Common myeloid progenitor, CD34-positive (primary cell): ENCODE measurements at regions of chr12 and their contacts with region 1.

Region 1: DNA sequence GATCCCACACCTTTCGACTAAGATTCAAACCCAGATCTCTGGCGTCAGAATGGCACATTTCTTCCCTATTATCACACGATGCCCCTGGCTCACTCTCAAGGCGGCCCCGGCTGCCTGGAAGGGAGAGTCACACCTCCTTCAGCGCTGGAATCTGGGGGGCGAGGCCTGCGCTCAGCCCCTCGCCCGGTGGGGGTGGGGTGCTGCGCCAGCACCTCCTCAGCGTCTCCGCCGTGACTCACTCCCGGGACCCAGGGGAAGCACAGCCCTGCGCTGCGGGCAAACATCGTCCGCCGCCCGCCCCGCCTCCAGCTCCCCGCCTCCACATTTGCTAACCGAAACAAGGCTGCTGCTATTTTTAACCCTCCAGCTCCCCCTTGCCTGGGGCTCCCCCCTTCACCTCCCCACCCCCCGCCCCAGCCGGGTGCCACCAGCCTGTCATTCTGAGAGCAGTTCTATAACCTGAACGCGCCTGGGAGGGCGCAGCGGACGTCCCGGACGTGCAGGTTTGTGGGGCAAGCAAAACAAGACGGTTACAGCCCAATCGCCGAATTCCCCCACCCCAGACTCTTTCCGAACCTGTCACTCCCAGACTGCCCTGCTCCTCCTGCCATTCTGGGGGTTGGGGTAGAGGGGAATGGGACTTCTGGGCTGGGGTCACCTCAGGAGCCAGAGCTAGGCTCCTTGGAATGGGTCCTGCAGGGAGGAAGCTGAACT is 6.7 kb downstream of the HDAC7 start:
- DNase-seq: peak; percentile 91 to 98 (median 97)
- H3K4me3 ChIP-seq: peak overlapping the region in 6 of 7 experiments; percentile 35 to 74 (median 58)
- H3K27ac ChIP-seq: peak overlapping the region; percentile 59 to 88
- H3K4me1 ChIP-seq: peaks cover 45 to 98% (median 97%) of the 10 kb centered on the region in 4 experiments
- H3K27me3 ChIP-seq: no peaks in the 10 kb centered on the region

Region 2: DNA sequence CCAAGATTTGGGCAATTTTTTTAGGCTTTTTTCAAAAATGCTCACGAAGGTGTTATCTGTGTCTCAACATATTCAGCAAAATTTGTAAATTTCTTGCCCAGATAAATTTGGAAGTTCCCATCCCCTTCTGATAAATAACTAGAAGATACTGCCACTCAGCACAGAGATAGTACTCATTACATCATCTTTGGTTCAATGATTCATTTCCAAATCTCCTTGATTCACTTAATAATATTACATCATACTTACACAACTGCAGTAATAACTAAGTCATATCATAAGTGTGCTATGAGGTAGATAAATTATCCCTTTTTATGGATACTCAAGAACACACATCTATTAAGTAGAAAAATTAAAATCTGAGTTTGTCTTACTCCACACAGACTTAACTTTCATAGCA is 196.5 kb before region 1 on chr12:
- CTCF ChIA-PET with region 1: no interaction called
- POLR2A ChIA-PET with region 1: no interaction called
- DNase-seq: no peak
- H3K4me3 ChIP-seq: no peak overlapping the region
- H3K27ac ChIP-seq: no peak overlapping the region
- H3K4me1 ChIP-seq: no peaks in the 10 kb centered on the region
- H3K27me3 ChIP-seq: no peaks in the 10 kb centered on the region

Region 3: DNA sequence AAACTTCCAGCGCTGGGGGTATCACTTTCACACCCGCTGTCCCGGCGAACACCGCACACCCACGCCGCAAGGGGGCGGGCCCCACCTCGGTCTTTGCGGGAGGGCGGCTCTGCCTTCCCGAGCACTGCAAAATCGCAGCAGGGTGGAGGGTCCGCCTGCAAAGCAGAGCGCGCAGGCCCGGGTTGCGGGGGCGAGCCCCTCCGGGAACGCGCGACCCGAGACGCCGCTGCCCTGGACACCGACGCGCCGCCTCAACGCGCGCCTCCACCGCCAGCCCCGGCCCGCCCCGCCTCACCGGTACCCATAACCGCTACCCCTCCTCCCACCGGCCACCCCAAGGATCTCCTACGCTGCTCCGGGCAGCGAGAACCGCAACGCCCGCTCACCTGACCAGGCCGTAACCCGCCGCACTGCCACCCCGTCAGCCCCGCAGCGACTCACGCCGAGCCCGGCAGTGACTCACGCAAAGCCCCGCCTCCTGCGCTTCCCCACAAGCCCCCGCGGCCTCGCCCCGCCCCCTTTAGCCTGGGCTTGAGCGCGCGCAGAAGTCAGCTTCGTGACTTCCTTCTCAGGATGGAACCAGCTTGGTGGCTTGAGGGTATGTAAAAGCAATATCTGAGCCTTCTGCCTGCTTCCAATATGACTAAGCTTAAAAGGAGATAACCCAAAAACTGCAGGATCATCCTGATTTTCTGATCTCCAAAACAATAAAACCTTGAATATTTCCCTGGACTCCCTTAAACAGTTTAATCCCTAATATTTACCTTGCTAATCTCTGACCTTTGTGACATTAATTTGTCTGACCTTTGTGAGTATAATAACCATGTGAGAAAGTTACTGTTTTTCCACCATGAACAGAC is 107.2 kb before region 1 on chr12 and contains the start of gene RPAP3:
- CTCF ChIA-PET with region 1: interaction called, 10 read pairs
- POLR2A ChIA-PET with region 1: no interaction called
- DNase-seq: peak; percentile 95 to 98 (median 98)
- H3K4me3 ChIP-seq: peak within 1 kb of the TSS; percentile 55 to 88 (median 80)
- H3K27ac ChIP-seq: peak within 1 kb of the TSS; percentile 77 to 91
- H3K4me1 ChIP-seq: peaks cover 36 to 56% (median 47%) of the 10 kb centered on the region in 4 experiments
- H3K27me3 ChIP-seq: no peaks in the 10 kb centered on the region

Region 4: DNA sequence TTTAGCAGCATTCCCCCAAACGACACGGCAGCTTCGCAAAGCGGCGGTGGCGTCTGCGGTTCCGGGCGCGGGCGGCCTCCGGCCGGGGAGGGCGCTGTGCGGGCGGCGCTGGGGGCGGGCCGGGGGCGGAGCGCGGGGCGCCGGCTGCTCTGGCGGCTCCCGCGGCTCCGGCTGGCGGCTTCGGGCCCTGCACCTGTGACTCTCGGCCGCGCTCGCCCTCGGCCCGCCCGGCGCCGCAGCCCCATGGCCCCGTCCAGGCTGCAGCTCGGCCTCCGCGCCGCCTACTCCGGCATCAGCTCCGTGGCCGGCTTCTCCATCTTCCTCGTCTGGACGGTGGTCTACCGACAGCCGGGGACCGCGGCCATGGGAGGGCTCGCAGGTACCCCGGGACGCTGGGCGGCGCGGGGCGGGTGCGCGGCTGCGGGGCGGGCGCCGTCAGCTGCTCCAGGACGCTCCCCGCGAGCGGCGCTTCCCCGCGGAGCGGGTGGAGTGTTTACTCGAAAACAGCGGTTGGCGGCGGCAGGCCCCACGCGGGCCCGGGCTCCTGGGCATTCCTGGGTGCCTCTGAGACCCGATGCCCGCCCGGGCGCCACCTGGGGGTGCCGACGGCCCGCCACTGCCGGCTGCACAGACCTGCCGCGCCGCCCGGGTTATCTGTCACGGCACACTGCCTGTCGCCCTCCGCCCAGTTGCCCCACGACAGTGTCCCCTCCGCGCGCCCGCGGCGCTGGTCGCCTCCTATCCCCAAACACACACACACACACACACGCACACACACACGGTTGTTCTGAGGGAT is 39.7 kb before region 1 on chr12 and contains the start of gene SLC48A1:
- CTCF ChIA-PET with region 1: interaction called, 22 read pairs
- POLR2A ChIA-PET with region 1: interaction called, 4 read pairs
- DNase-seq: peak; percentile 65 to 81 (median 73)
- H3K4me3 ChIP-seq: peak within 1 kb of the TSS; percentile 62 to 85 (median 80)
- H3K27ac ChIP-seq: peak within 1 kb of the TSS in 1 of 2 experiments; percentile 77
- H3K4me1 ChIP-seq: peaks cover 14 to 63% (median 56%) of the 10 kb centered on the region in 4 experiments
- H3K27me3 ChIP-seq: no peaks in the 10 kb centered on the region